Activated T-helper 1 cell treated with anti-CD3 and anti-CD28 coated beads, Interleukin-12 subunit alpha, Interleukin-12 subunit beta, Interleukin-2, Interleukin-4 antibody, amounts not matched to agents 30 ng/mL and 10 ng/mL and 1 ng/mL, durations not matched to agents 14 hours and 24 hours and 36 hours (primary cell): ENCODE measurements at regions of chr19 and their contacts with region 1.

Region 1: GRCh38 chr19:47157431-47158321 is 27.0 kb downstream of the SAE1 start:
- DNase-seq: peak; percentile 23
- H3K4me3 Mint-ChIP-seq: peak overlapping the region; percentile 81
- H3K27ac Mint-ChIP-seq: peak overlapping the region; percentile 90
- H3K4me1 Mint-ChIP-seq: peaks cover 57% of the 10 kb centered on the region
- H3K27me3 Mint-ChIP-seq: no peaks in the 10 kb centered on the region

Region 2: GRCh38 chr19:46866387-46867152 is 291.1 kb before region 1 on chr19:
- intact Hi-C with region 1: no loop called
- DNase-seq: no peak
- H3K4me3 Mint-ChIP-seq: no peak overlapping the region
- H3K27ac Mint-ChIP-seq: no peak overlapping the region
- H3K4me1 Mint-ChIP-seq: peaks cover 32% of the 10 kb centered on the region
- H3K27me3 Mint-ChIP-seq: no peaks in the 10 kb centered on the region

Region 3: DNA sequence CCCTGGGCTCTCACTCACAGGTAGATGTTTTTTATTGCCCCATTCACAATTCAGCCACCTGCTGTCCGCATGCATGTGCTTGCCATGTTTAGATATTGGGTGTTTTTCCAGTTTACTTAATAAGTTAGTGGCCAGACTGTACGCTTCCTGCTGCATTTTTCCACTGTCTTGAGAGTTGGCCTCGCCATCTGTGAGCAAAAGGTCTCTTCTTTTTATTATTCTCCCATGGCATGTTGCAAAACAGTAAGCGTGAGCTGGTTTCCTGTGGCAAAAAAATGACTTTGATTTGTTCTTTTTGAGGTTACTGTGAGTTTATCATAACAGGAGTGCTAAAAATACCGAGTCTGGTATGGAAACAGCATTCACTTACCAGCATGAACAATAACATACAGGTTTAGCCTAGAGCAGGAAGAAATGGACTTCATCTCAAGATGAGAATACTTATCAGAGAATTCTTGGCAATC is 19.0 kb after region 1 on chr19:
- intact Hi-C with region 1: loop called (anchors 1 kb)
- DNase-seq: peak; percentile 31
- H3K4me3 Mint-ChIP-seq: peak overlapping the region; percentile 68
- H3K27ac Mint-ChIP-seq: peak overlapping the region; percentile 90
- H3K4me1 Mint-ChIP-seq: peaks cover 53% of the 10 kb centered on the region
- H3K27me3 Mint-ChIP-seq: no peaks in the 10 kb centered on the region

Region 4: GRCh38 chr19:47203254-47203653 is 45.6 kb after region 1 on chr19:
- intact Hi-C with region 1: no loop called
- DNase-seq: no peak
- H3K4me3 Mint-ChIP-seq: no peak overlapping the region
- H3K27ac Mint-ChIP-seq: peak overlapping the region; percentile 67
- H3K4me1 Mint-ChIP-seq: peaks cover 22% of the 10 kb centered on the region
- H3K27me3 Mint-ChIP-seq: no peaks in the 10 kb centered on the region

Region 5: GRCh38 chr19:47225746-47226425 is 68.2 kb after region 1 on chr19:
- intact Hi-C with region 1: loop called (anchors 1 kb)
- DNase-seq: peak; percentile 87
- H3K4me3 Mint-ChIP-seq: peak overlapping the region; percentile 38
- H3K27ac Mint-ChIP-seq: peak overlapping the region; percentile 82
- H3K4me1 Mint-ChIP-seq: peaks cover 6% of the 10 kb centered on the region
- H3K27me3 Mint-ChIP-seq: no peaks in the 10 kb centered on the region

Region 6: GRCh38 chr19:47273313-47273977 is 115.8 kb after region 1 on chr19:
- intact Hi-C with region 1: no loop called
- DNase-seq: peak; percentile 90
- H3K4me3 Mint-ChIP-seq: peak overlapping the region; percentile 92
- H3K27ac Mint-ChIP-seq: peak overlapping the region; percentile 98
- H3K4me1 Mint-ChIP-seq: peaks cover 29% of the 10 kb centered on the region
- H3K27me3 Mint-ChIP-seq: no peaks in the 10 kb centered on the region